CD14-positive monocyte (primary cell): ENCODE measurements at regions of chr1 and their contacts with region 1.

Region 1: GRCh38 chr1:203273206-203273868 is 32.0 kb upstream of the BTG2 start:
- DNase-seq: peak; percentile 85 to 95 (median 93)
- H3K4me3 ChIP-seq: peak overlapping the region; percentile 29 to 75 (median 45)
- H3K4me3 Mint-ChIP-seq: peak overlapping the region; percentile 76 to 88
- H3K27ac ChIP-seq: peak overlapping the region; percentile 73 to 90
- H3K27ac Mint-ChIP-seq: peak overlapping the region; percentile 93 to 95 (median 93)
- H3K4me1 ChIP-seq: peaks cover 68 to 70% of the 10 kb centered on the region in 2 donors
- H3K4me1 Mint-ChIP-seq: peaks cover 60% of the 10 kb centered on the region
- H3K27me3 ChIP-seq: no peaks in the 10 kb centered on the region
- H3K27me3 Mint-ChIP-seq: peaks cover 0 to 8% (median 2%) of the 10 kb centered on the region in 3 donors
- CTCF ChIP-seq: peak; percentile 96

Region 2: GRCh38 chr1:203290261-203291089 is 17.1 kb after region 1 on chr1:
- intact Hi-C with region 1: loop called in 1 of 2 experiments (anchors 2 kb)
- DNase-seq: peak; percentile 93 to 97 (median 97)
- H3K4me3 ChIP-seq: peak overlapping the region in 2 of 3 experiments; percentile 14 to 47
- H3K4me3 Mint-ChIP-seq: peak overlapping the region; percentile 69 to 84
- H3K27ac ChIP-seq: peak overlapping the region; percentile 92 to 99
- H3K27ac Mint-ChIP-seq: peak overlapping the region; percentile 99 to 100 (median 100)
- H3K4me1 ChIP-seq: peaks cover 61 to 66% of the 10 kb centered on the region in 2 donors
- H3K4me1 Mint-ChIP-seq: peaks cover 64% of the 10 kb centered on the region
- H3K27me3 ChIP-seq: no peaks in the 10 kb centered on the region
- H3K27me3 Mint-ChIP-seq: peaks cover 0 to 2% (median 0%) of the 10 kb centered on the region in 3 donors
- CTCF ChIP-seq: no peak

Region 3: GRCh38 chr1:203304919-203305808 is 31.8 kb after region 1 on chr1 and contains the start of gene BTG2:
- intact Hi-C with region 1: loop called (anchors 1 to 5 kb)
- DNase-seq: peak; percentile 92 to 96 (median 93)
- H3K4me3 ChIP-seq: peak within 1 kb of the TSS; percentile 81 to 99 (median 97)
- H3K4me3 Mint-ChIP-seq: peak within 1 kb of the TSS; percentile 93 to 100
- H3K27ac ChIP-seq: peak within 1 kb of the TSS; percentile 98 to 100
- H3K27ac Mint-ChIP-seq: peak within 1 kb of the TSS; percentile 97 to 99 (median 98)
- H3K4me1 ChIP-seq: peaks cover 54 to 68% of the 10 kb centered on the region in 2 donors
- H3K4me1 Mint-ChIP-seq: peaks cover 69% of the 10 kb centered on the region
- H3K27me3 ChIP-seq: no peaks in the 10 kb centered on the region
- H3K27me3 Mint-ChIP-seq: peaks cover 0 to 3% (median 2%) of the 10 kb centered on the region in 3 donors
- CTCF ChIP-seq: no peak
- polyA plus RNA-seq, gene BTG2: 293 to 539 (median 483) TPM

Region 4: GRCh38 chr1:203326830-203327683 is 53.7 kb after region 1 on chr1:
- intact Hi-C with region 1: loop called in 1 of 2 experiments (anchors 2 kb)
- DNase-seq: peak; percentile 83 to 90 (median 88)
- H3K4me3 ChIP-seq: peak overlapping the region; percentile 39 to 74 (median 53)
- H3K4me3 Mint-ChIP-seq: peak overlapping the region; percentile 69 to 86
- H3K27ac ChIP-seq: peak overlapping the region; percentile 93 to 94
- H3K27ac Mint-ChIP-seq: peak overlapping the region; percentile 94 to 98 (median 95)
- H3K4me1 ChIP-seq: peaks cover 61 to 70% of the 10 kb centered on the region in 2 donors
- H3K4me1 Mint-ChIP-seq: peaks cover 62% of the 10 kb centered on the region
- H3K27me3 ChIP-seq: no peaks in the 10 kb centered on the region
- H3K27me3 Mint-ChIP-seq: peaks cover 0 to 6% (median 0%) of the 10 kb centered on the region in 3 donors
- CTCF ChIP-seq: no peak

Region 5: DNA sequence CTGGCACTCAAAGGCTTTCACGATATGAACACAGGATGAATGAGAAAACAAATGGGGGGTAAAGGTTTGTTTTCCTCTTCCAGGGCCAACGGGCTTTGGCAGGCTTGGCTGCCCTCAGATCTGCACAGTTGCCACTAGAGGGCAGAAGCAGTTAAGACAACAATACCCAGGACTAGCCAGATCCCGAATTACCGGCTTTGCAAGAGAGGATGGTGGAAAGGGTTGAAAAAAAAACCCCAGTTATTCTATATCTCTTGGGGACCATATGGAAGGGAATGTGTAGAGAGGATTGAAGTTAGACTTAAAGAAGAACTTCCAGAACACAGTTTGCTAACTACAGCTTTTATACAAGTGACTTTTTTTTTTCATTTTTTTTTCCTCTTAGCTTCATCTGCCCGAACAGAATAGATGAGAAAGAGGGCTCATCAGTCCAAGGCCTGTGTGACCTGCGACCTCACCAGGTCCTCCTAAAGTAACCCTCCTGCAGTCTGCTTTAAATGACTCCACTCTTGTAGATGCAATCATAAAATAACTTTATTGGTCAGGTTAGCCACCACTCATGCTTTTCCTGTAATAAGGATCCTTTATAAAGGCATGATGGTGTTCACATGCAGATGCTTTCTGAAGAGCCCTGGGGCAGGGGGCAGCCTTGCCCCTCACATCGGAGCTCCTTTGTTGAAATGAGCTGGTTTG is 66.9 kb after region 1 on chr1:
- intact Hi-C with region 1: loop called (anchors 1 to 2 kb)
- DNase-seq: peak; percentile 58 to 78 (median 78)
- H3K4me3 ChIP-seq: no peak overlapping the region
- H3K4me3 Mint-ChIP-seq: peak overlapping the region in 1 of 2 donors; percentile 78
- H3K27ac ChIP-seq: no peak overlapping the region
- H3K27ac Mint-ChIP-seq: no peak overlapping the region
- H3K4me1 ChIP-seq: no peaks in the 10 kb centered on the region
- H3K4me1 Mint-ChIP-seq: peaks cover 17% of the 10 kb centered on the region
- H3K27me3 ChIP-seq: peaks cover 19 to 29% of the 10 kb centered on the region in 2 donors
- H3K27me3 Mint-ChIP-seq: peaks cover 21 to 31% (median 25%) of the 10 kb centered on the region in 3 donors
- CTCF ChIP-seq: peak; percentile 89

Region 6: GRCh38 chr1:203408486-203409427 is 135.4 kb after region 1 on chr1:
- intact Hi-C with region 1: loop called in 1 of 2 experiments (anchors 10 kb)
- DNase-seq: peak; percentile 74 to 92 (median 80)
- H3K4me3 ChIP-seq: no peak overlapping the region
- H3K4me3 Mint-ChIP-seq: no peak overlapping the region
- H3K27ac ChIP-seq: peak overlapping the region in 1 of 2 donors; percentile 69
- H3K27ac Mint-ChIP-seq: peak overlapping the region in 5 of 7 donors; percentile 49 to 90 (median 78)
- H3K4me1 ChIP-seq: peaks cover 40 to 43% of the 10 kb centered on the region in 2 donors
- H3K4me1 Mint-ChIP-seq: peaks cover 47% of the 10 kb centered on the region
- H3K27me3 ChIP-seq: no peaks in the 10 kb centered on the region
- H3K27me3 Mint-ChIP-seq: peaks cover 0 to 6% (median 3%) of the 10 kb centered on the region in 3 donors
- CTCF ChIP-seq: no peak

Region 7: DNA sequence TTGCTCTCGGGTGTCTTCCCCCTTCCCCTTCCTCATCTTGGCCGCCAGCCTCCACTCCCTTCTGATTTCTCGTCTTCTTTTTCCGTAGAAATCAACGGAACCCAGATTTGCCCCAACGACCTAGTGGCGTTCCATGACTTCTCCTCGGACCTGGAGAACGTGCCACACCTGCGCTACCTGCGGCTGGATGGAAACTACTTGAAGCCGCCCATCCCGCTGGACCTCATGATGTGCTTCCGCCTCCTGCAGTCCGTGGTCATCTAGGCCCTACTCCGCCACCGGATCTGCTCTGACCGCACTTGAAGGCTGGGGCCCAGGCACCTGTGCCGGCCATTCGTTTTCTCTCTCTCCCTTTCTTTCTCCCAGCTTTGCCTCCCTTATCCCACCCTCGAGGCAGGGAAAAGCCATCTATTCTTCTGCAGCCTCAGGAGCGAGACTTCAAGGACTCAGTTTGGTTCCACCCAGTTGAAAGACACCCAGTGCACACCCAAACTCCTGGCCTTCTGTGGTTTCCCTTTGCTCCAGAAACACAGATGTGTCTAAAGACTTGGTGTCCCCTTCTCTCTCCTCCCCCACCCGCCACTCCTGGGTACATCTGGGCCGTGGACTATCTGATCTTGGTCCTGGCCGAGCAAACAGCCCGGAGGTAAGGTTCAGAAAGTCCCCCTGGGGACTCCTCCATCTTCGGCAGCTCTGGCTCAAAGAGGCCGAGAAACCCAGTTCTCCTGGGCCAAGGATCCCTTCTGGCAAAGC is 213.5 kb after region 1 on chr1:
- intact Hi-C with region 1: loop called in 1 of 2 experiments (anchors 5 kb)
- DNase-seq: no peak
- H3K4me3 ChIP-seq: no peak overlapping the region
- H3K4me3 Mint-ChIP-seq: no peak overlapping the region
- H3K27ac ChIP-seq: no peak overlapping the region
- H3K27ac Mint-ChIP-seq: peak overlapping the region in 4 of 7 donors; percentile 48 to 85 (median 59)
- H3K4me1 ChIP-seq: peaks cover 16 to 26% of the 10 kb centered on the region in 2 donors
- H3K4me1 Mint-ChIP-seq: peaks cover 24% of the 10 kb centered on the region
- H3K27me3 ChIP-seq: no peaks in the 10 kb centered on the region
- H3K27me3 Mint-ChIP-seq: peaks cover 0 to 11% (median 7%) of the 10 kb centered on the region in 3 donors
- CTCF ChIP-seq: no peak